ENCODE measurements at regions of chr17 and their contacts with region 1.

Region 1: GRCh38 chr17:9729034-9729650 is 62.2 kb downstream of the DHRS7C start:
- DNase-seq: no peak
- ATAC-seq: peak; percentile 33
- H3K4me3 Mint-ChIP-seq: no peak overlapping the region
- H3K27ac Mint-ChIP-seq: no peak overlapping the region
- H3K4me1 Mint-ChIP-seq: no peaks in the 10 kb centered on the region
- H3K27me3 Mint-ChIP-seq: no peaks in the 10 kb centered on the region

Region 2: DNA sequence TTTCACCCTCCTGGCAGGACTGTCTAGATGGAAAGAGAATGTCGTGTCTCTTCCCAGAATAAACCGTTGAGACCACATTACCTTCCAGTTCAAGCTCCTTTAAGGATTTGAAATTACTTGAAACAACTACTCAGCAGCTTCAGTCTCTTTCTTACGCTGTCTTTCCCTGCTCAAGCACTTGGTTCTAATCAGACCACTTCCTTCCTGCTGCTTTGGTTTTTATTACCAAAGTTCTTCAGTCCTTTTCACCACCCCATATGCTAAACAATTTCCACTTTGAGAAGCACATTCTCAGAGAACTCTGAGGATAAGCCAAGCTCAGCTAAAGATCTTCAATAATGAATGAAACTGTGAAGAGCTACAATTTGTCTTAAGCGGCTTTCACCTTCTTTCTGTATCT is 259.0 kb before region 1 on chr17:
- CTCF ChIA-PET with region 1: no interaction called
- POLR2A ChIA-PET with region 1: no interaction called
- intact Hi-C with region 1: no loop called
- DNase-seq: no peak
- ATAC-seq: peak; percentile 78
- H3K4me3 Mint-ChIP-seq: peak overlapping the region; percentile 4
- H3K27ac Mint-ChIP-seq: peak overlapping the region; percentile 74
- H3K4me1 Mint-ChIP-seq: peaks cover 42% of the 10 kb centered on the region
- H3K27me3 Mint-ChIP-seq: no peaks in the 10 kb centered on the region

Region 3: GRCh38 chr17:9557161-9557755 is 171.9 kb before region 1 on chr17:
- CTCF ChIA-PET with region 1: no interaction called
- POLR2A ChIA-PET with region 1: no interaction called
- intact Hi-C with region 1: no loop called
- DNase-seq: no peak
- ATAC-seq: no peak
- H3K4me3 Mint-ChIP-seq: no peak overlapping the region
- H3K27ac Mint-ChIP-seq: no peak overlapping the region
- H3K4me1 Mint-ChIP-seq: no peaks in the 10 kb centered on the region
- H3K27me3 Mint-ChIP-seq: no peaks in the 10 kb centered on the region

Region 4: DNA sequence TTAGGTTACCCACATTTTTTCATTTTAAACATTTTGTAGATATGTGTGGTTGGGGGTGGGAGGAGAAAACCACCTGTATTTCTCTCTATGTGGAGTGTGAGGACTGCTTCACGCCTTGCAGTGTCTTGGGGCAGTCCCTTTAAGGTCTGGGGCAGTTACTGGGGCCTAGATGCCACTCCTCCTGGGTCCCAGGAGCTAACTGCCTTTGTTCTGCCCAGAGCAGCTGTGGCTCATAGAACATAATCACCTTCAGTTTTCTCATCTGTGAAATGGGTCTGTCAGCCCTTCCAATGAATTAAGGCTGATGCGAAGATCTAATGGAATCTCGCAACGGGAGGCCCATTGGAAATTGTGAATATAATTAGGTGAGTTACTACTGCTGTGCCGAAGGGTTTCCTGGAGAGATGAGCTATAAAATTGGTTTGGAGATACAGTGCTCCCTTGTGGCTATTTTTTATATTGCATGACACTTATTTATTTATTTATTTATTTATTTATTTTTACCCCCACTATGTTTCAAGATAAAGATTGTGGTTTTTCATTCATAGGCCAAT is 39.3 kb after region 1 on chr17:
- CTCF ChIA-PET with region 1: interaction called, 3 read pairs
- POLR2A ChIA-PET with region 1: no interaction called
- intact Hi-C with region 1: loop called in 1 of 2 experiments (anchors 2 kb)
- DNase-seq: no peak
- ATAC-seq: no peak
- H3K4me3 Mint-ChIP-seq: no peak overlapping the region
- H3K27ac Mint-ChIP-seq: no peak overlapping the region
- H3K4me1 Mint-ChIP-seq: no peaks in the 10 kb centered on the region
- H3K27me3 Mint-ChIP-seq: peaks cover 7% of the 10 kb centered on the region

Region 5: GRCh38 chr17:9890124-9890523 is 161.0 kb after region 1 on chr17:
- CTCF ChIA-PET with region 1: interaction called, 4 read pairs
- POLR2A ChIA-PET with region 1: no interaction called
- intact Hi-C with region 1: loop called in 1 of 2 experiments (anchors 2 kb)
- DNase-seq: peak; percentile 56
- ATAC-seq: peak; percentile 78
- H3K4me3 Mint-ChIP-seq: no peak overlapping the region
- H3K27ac Mint-ChIP-seq: no peak overlapping the region
- H3K4me1 Mint-ChIP-seq: no peaks in the 10 kb centered on the region
- H3K27me3 Mint-ChIP-seq: peaks cover 6% of the 10 kb centered on the region

Region 6: GRCh38 chr17:9959377-9959981 is 230.3 kb after region 1 on chr17:
- CTCF ChIA-PET with region 1: interaction called, 3 read pairs
- POLR2A ChIA-PET with region 1: no interaction called
- intact Hi-C with region 1: loop called in 1 of 2 experiments (anchors 10 kb)
- DNase-seq: peak; percentile 71
- ATAC-seq: no peak
- H3K4me3 Mint-ChIP-seq: no peak overlapping the region
- H3K27ac Mint-ChIP-seq: no peak overlapping the region
- H3K4me1 Mint-ChIP-seq: no peaks in the 10 kb centered on the region
- H3K27me3 Mint-ChIP-seq: peaks cover 4% of the 10 kb centered on the region

Measured in activated CD4-positive, alpha-beta T cell treated with anti-CD3 and anti-CD28 coated beads for 36 hours (primary cell).